Heart right ventricle (tissue), 16 donors: ENCODE measurements at regions of chr13 and their contacts with region 1.

Region 1: GRCh38 chr13:30107581-30107992 is 199.8 kb downstream of the KATNAL1 start:
- DNase-seq: no peak
- ATAC-seq: peak in 1 of 8 donors; percentile 19
- H3K4me3 ChIP-seq: no peak overlapping the region
- H3K27ac ChIP-seq: no peak overlapping the region
- H3K4me1 ChIP-seq: peaks cover 0 to 27% (median 2%) of the 10 kb centered on the region in 9 donors
- H3K27me3 ChIP-seq: no peaks in the 10 kb centered on the region
- CTCF ChIP-seq: no peak

Region 2: DNA sequence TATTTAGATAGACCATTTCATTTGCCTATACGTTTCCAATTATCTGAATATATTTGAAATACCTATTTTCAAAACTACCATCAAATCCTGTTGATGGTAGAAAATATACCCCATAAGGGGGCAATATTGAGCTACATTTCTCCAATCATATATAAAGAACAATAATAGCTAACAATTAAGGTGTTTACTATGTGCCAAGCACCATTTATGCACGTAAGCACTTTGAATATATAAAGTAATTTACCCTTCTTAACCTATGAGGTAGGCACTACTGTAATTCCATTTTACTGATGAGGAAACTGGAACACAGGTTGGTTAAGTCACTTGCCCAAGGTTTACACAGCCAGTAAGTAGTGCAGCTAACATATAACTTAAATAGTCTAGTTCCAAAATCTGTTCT is 336.3 kb before region 1 on chr13:
- intact Hi-C with region 1: loop called in 9 of 10 experiments (anchors 2 to 5 kb)
- DNase-seq: no peak
- ATAC-seq: no peak
- H3K4me3 ChIP-seq: no peak overlapping the region
- H3K27ac ChIP-seq: no peak overlapping the region
- H3K4me1 ChIP-seq: no peaks in the 10 kb centered on the region
- H3K27me3 ChIP-seq: no peaks in the 10 kb centered on the region
- CTCF ChIP-seq: peak; percentile 17 to 70 (median 59)

Region 3: GRCh38 chr13:29935309-29935981 is 172.1 kb before region 1 on chr13:
- intact Hi-C with region 1: loop called in 1 of 10 experiments (anchors 10 kb)
- DNase-seq: no peak
- ATAC-seq: peak in 2 of 8 donors; percentile 25 to 51
- H3K4me3 ChIP-seq: peak overlapping the region in 1 of 10 donors; percentile 27
- H3K27ac ChIP-seq: no peak overlapping the region
- H3K4me1 ChIP-seq: peaks cover 0 to 14% (median 0%) of the 10 kb centered on the region in 9 donors
- H3K27me3 ChIP-seq: peaks cover 0 to 23% (median 7%) of the 10 kb centered on the region in 7 donors
- CTCF ChIP-seq: no peak

Region 4: DNA sequence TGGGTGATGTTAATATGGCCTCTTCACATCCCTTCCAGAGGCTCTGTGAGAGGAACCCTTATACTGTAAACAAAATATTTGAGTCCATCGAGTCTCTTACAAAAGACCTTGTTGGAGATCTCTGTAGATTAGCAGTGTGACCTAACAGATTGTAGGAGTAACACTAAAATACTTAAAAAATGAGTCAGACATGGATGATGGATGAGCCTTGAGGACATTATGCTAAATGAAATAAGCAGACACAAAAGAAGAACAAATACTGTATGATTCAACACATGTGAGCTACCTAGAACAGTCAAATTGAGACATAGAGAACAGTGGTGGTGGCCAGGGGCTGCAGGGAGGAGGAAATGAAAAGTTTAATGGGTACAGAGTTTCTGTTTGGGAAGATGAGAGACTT is 105.0 kb before region 1 on chr13:
- intact Hi-C with region 1: no loop called
- DNase-seq: no peak
- ATAC-seq: no peak
- H3K4me3 ChIP-seq: no peak overlapping the region
- H3K27ac ChIP-seq: no peak overlapping the region
- H3K4me1 ChIP-seq: no peaks in the 10 kb centered on the region
- H3K27me3 ChIP-seq: peaks cover 0 to 5% (median 0%) of the 10 kb centered on the region in 7 donors
- CTCF ChIP-seq: no peak

Region 5: DNA sequence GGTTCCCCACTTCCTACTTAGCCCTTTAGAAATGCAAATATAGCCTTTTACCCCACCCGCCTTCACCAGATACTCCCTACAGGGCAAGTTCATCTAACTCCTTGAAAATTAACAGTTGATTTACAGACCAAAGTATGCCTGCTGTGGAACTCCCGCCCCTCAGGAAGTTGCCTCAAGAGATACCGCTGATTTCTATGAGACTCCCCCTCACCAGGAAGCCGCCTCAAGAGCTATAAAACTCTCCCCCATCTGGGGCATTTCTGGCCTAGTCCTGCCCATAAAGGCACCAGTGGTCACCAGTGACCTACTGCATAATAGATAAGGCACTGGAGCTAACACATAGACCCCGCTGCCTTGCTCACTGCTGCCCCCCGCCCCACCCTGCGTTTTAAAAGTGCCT is 55.5 kb before region 1 on chr13:
- intact Hi-C with region 1: no loop called
- DNase-seq: no peak
- ATAC-seq: no peak
- H3K4me3 ChIP-seq: no peak overlapping the region
- H3K27ac ChIP-seq: no peak overlapping the region
- H3K4me1 ChIP-seq: peaks cover 0 to 3% (median 0%) of the 10 kb centered on the region in 9 donors
- H3K27me3 ChIP-seq: peaks cover 0 to 41% (median 30%) of the 10 kb centered on the region in 7 donors
- CTCF ChIP-seq: no peak

Region 6: DNA sequence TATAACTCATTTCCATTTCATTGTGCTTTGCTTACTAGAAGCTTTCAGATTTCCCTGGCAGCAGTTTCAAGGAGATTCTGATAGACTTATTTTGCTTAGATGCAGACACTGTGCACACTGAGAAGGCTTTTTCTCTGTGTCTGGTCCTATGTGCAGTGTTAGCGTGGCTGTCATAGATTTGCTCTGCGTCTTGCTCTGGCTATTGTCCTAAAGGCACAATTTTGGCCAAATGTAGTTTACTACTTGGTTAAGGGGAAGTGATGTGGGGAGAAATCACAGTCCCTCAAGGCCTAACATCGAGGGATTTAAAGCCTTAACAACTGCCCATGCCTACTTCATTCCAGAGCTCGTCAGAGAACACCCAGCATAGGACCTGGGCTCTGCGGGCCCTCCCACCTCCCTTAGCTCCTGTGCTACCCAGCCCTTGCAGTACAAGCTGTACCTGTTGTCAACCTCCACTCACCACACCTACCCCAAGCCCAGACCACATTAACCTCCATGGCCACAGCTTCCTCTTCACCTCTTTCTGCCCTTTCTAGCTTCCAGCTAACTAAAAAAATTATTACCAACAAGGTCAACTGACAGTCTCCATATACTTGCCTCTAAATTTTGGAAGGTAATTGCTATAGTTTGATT is 238.7 kb after region 1 on chr13:
- intact Hi-C with region 1: no loop called
- DNase-seq: no peak
- ATAC-seq: no peak
- H3K4me3 ChIP-seq: no peak overlapping the region
- H3K27ac ChIP-seq: no peak overlapping the region
- H3K4me1 ChIP-seq: peaks cover under 1 to 34% (median 14%) of the 10 kb centered on the region in 9 donors
- H3K27me3 ChIP-seq: no peaks in the 10 kb centered on the region
- CTCF ChIP-seq: no peak